ENCODE measurements at regions of chr13 and their contacts with region 1.

Region 1: GRCh38 chr13:64410276-64411053 is 2819.7 kb downstream of the PCDH9 start:
- DNase-seq: no peak
- ATAC-seq: no peak
- H3K4me3 Mint-ChIP-seq: no peak overlapping the region
- H3K27ac Mint-ChIP-seq: no peak overlapping the region
- H3K4me1 Mint-ChIP-seq: no peaks in the 10 kb centered on the region
- H3K27me3 Mint-ChIP-seq: no peaks in the 10 kb centered on the region
- CTCF ChIP-seq: no peak

Region 2: GRCh38 chr13:64332048-64332447 is 78.4 kb before region 1 on chr13:
- CTCF ChIA-PET with region 1: no interaction called
- POLR2A ChIA-PET with region 1: no interaction called
- intact Hi-C with region 1: loop called (anchors 1 kb)
- DNase-seq: no peak
- ATAC-seq: no peak
- H3K4me3 Mint-ChIP-seq: no peak overlapping the region
- H3K27ac Mint-ChIP-seq: no peak overlapping the region
- H3K4me1 Mint-ChIP-seq: no peaks in the 10 kb centered on the region
- H3K27me3 Mint-ChIP-seq: no peaks in the 10 kb centered on the region
- CTCF ChIP-seq: no peak

Region 3: DNA sequence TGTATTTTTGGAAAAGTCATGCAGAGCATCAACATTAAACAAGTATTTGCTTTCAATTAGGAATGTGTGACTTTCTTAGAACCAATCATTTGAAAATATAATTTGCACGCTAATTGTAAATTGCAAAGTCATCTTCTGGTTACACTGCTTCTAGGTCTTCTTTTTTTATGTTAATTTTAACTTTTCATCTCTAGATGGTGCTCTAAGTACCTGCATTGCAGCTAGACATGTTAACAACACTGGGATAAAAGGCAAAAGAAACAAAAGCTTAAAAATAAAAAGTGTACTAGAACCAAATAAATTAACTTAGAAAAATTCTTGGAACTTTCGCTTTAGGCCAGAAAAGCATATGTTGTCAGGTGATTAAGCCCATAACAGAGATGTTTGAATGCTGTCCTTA is 61.5 kb after region 1 on chr13:
- CTCF ChIA-PET with region 1: no interaction called
- POLR2A ChIA-PET with region 1: interaction called, 10 read pairs
- intact Hi-C with region 1: no loop called
- DNase-seq: no peak
- ATAC-seq: no peak
- H3K4me3 Mint-ChIP-seq: no peak overlapping the region
- H3K27ac Mint-ChIP-seq: no peak overlapping the region
- H3K4me1 Mint-ChIP-seq: no peaks in the 10 kb centered on the region
- H3K27me3 Mint-ChIP-seq: no peaks in the 10 kb centered on the region
- CTCF ChIP-seq: no peak

Measured in activated B cell treated with CpG ODN at 0.5 μM for 24 hours (primary cell).